ENCODE measurements at regions of chr11 and their contacts with region 1.

Region 1: DNA sequence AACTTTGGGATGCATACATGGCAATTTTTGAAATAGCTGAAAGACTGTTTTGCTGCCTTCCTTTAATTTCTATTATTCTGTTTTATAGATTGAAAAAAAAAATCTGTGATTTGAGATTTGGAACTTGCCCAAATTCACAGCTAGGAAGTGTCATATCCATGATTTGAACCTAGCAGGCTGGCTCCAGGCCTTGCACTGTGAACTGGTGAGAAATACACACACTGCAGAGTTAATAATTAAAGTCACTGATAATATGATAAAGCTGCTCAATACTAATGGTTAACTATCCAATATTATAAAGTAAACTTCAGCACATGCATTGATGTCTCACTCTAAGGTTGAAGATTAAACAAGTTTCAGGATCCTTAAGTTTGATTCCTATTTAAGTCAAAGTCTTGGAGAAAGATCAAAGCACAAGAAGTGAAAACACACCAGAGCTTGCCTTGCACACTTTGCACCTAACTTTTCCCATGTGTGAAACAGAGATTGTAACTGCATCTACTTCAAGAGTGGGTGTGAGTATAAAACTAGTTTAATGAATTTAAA is 150.6 kb upstream of the CCDC179 start:
- DNase-seq: no peak
- ATAC-seq: no peak
- H3K4me3 ChIP-seq: no peak overlapping the region
- H3K27ac ChIP-seq: no peak overlapping the region
- H3K4me1 ChIP-seq: peaks cover 22% of the 10 kb centered on the region
- H3K27me3 ChIP-seq: no peaks in the 10 kb centered on the region
- CTCF ChIP-seq: no peak

Region 2: GRCh38 chr11:22920939-22921565 is 89.8 kb before region 1 on chr11:
- CTCF ChIA-PET with region 1: no interaction called
- POLR2A ChIA-PET with region 1: no interaction called
- intact Hi-C with region 1: loop called (anchors 1 kb)
- DNase-seq: peak; percentile 64
- ATAC-seq: peak; percentile 77
- H3K4me3 ChIP-seq: no peak overlapping the region
- H3K27ac ChIP-seq: no peak overlapping the region
- H3K4me1 ChIP-seq: no peaks in the 10 kb centered on the region
- H3K27me3 ChIP-seq: no peaks in the 10 kb centered on the region
- CTCF ChIP-seq: peak; percentile 76

Region 3: GRCh38 chr11:22957786-22958185 is 53.1 kb before region 1 on chr11:
- CTCF ChIA-PET with region 1: no interaction called
- POLR2A ChIA-PET with region 1: no interaction called
- intact Hi-C with region 1: loop called (anchors 2 kb)
- DNase-seq: peak; percentile 4
- ATAC-seq: peak; percentile 81
- H3K4me3 ChIP-seq: no peak overlapping the region
- H3K27ac ChIP-seq: no peak overlapping the region
- H3K4me1 ChIP-seq: no peaks in the 10 kb centered on the region
- H3K27me3 ChIP-seq: no peaks in the 10 kb centered on the region
- CTCF ChIP-seq: no peak

Region 4: DNA sequence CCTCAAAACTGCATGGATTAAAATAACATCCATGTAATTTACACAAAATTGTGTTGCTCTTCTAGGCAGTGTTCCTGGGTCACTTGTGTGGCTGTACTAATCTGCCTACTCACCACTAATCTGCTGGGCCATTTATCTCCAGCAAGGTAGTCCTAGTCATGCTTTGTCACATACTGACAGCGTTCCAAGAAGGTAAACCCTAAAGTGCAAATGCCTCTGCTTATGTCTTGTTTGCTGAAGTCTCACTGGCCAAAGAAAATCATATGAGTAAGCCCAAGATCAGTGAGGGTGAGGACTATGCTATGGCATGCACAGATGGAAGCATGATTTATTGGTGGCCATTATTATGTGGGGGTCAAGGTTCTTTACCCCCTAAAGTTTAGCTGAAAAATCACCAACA is 855.8 kb after region 1 on chr11:
- CTCF ChIA-PET with region 1: no interaction called
- POLR2A ChIA-PET with region 1: no interaction called
- intact Hi-C with region 1: loop called (anchors 2 kb)
- DNase-seq: peak; percentile 93
- ATAC-seq: peak; percentile 91
- H3K4me3 ChIP-seq: peak overlapping the region; percentile 29; the same call in 1 of the 2 replicates
- H3K27ac ChIP-seq: peak overlapping the region; percentile 72
- H3K4me1 ChIP-seq: peaks cover 22% of the 10 kb centered on the region
- H3K27me3 ChIP-seq: no peaks in the 10 kb centered on the region
- CTCF ChIP-seq: no peak

Measured in PC-3 (cell line).